ENCODE measurements at regions of chr16 and their contacts with region 1.

Region 1: DNA sequence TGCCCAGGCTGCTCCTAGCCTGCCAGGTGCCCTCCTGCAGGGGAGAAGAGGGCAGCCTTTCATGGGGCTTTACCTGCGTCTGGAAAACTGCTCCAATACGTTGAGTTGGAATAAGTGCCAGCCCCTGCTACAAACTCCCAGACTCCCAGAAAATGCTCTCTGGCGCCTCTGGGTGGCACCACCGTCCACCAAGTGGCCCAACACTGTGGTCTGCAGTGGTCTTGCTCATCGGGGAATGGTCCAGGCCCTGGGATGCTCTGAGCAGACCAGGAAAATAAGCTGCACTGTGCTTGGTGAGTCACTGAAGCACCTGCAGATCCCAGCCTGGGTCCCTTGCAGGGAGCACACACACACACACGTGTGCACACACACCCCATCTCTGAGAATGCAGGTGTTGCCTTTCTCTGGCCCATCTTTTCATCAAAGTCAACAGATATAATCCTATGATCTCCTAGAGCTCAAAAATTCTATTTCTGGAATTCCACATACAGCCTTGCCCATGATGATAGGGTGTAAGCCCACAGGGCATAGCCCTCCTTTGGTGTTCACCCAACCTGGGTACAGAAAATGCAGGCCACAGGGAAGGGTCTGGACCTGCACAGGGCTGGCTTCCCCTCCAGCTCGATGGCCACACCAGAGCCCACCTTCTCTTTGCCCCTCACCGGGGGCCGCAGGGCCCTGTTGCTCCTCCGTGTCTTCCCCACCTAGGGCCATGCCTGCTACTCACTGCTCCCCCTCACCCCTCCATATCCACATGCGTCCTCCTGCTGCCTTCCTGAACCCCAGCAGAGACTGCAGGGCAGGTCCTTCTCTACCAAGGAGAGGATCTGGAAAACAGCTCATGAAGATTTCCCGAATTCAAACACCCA is 20.5 kb downstream of the CDIP1 start:
- DNase-seq: peak; percentile 29
- H3K4me3 Mint-ChIP-seq: no peak overlapping the region
- H3K27ac Mint-ChIP-seq: no peak overlapping the region
- H3K4me1 Mint-ChIP-seq: peaks cover 29% of the 10 kb centered on the region
- H3K27me3 Mint-ChIP-seq: no peaks in the 10 kb centered on the region

Region 2: DNA sequence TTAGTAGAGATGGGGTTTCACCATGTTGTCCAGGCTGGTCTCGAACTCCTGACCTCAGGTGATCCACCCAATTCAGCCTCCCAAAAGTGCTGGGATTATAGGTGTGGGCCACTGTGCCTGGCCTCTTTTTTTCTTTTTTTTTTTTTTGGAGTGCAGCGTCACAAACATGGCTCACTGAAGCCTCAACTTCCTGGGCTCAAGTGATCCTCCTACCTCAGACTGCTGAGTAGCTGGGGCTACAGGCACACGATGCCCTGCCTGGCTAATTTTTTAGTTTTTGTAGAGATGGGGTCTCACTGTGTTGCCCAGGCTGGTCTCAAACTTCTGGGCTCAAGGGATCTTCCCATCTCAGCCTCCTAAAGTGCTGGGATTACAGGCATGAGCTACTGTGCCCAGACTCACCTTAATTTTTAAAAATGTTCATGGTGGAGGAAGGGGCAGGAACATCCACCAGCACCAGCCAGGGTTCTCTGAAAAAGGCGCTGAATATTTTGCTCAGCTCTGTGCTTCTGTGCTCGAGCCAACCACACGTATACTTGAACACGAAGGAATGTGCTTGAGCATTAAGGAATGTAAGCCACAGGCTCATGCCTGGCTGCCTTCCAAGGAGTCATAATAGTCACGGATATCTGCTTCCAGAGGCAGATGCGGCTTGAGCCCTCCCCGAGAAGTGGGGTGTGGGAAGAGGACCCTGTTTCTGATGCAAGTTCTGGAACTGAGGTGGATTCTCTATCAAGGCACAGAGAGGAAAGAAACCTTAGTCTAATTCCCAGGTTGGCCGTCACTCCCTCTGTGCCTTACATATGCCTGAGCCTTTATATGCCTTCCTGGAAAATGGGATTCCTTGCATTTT is 572.1 kb before region 1 on chr16:
- CTCF ChIA-PET with region 1: no interaction called
- POLR2A ChIA-PET with region 1: no interaction called
- intact Hi-C with region 1: no loop called
- DNase-seq: no peak
- H3K4me3 Mint-ChIP-seq: no peak overlapping the region
- H3K27ac Mint-ChIP-seq: no peak overlapping the region
- H3K4me1 Mint-ChIP-seq: no peaks in the 10 kb centered on the region
- H3K27me3 Mint-ChIP-seq: peaks cover 5% of the 10 kb centered on the region

Region 3: DNA sequence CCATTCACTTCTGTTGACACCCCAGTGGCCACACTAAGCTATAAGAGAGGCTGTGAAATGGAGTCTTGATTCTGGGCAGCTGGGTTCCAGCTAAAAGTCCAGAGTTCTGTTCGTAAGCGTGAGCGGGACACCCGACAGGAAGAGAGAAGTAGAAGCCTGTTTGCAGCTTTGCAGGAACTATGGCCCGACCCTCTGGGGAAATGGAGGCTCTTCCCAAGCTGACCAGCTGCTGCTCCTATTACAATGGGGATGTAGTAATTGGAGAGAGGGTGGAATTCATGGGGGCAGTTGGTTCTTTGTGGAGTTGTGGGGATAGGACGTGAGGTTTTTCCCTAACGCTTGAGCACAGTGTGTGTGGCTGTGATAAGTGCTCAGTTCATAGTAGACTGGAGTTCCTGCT is 68.2 kb after region 1 on chr16:
- CTCF ChIA-PET with region 1: interaction called, 14 read pairs
- POLR2A ChIA-PET with region 1: no interaction called
- intact Hi-C with region 1: no loop called
- DNase-seq: no peak
- H3K4me3 Mint-ChIP-seq: no peak overlapping the region
- H3K27ac Mint-ChIP-seq: no peak overlapping the region
- H3K4me1 Mint-ChIP-seq: peaks cover 3% of the 10 kb centered on the region
- H3K27me3 Mint-ChIP-seq: peaks cover 5% of the 10 kb centered on the region